ENCODE measurements at regions of chr5 and their contacts with region 1.

Region 1: GRCh38 chr5:10353241-10354047 is at the start of gene MARCHF6:
- DNase-seq: peak; percentile 95
- H3K4me3 ChIP-seq: peak within 1 kb of the TSS; percentile 83 to 97
- H3K27ac ChIP-seq: peak within 1 kb of the TSS; percentile 85 to 98
- H3K4me1 ChIP-seq: peaks cover 0 to 16% of the 10 kb centered on the region in 2 experiments; a peak in 2 of 4 replicates
- H3K27me3 ChIP-seq: no peaks in the 10 kb centered on the region
- CTCF ChIP-seq: no peak
- EP300 ChIP-seq: peak in 1 of 2 experiments; percentile 21; a peak in 1 of 4 replicates
- RAD21 ChIP-seq: no peak
- polyA plus RNA-seq, gene MARCHF6: 52.4 and 98.0 TPM in 2 replicates

Region 2: DNA sequence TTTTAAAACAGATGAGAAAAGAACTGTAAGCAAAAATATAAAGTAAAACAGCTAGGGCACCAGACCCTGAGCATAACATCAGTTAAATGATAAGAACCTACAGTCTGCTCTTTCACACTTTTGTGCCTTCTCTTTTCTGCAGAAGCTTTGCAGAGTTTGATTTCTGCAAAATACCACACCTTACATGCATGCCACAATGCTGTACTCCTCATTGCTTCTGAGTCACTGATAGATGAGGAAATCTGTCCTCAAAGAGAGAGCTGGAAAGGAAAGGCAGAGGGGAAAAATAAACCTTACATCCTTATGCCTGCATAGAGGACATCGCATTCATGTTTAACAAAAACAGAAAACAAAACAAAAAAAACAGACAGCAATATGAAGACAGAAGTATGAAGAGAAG is 246.6 kb before region 1 on chr5:
- CTCF ChIA-PET with region 1: no interaction called
- POLR2A ChIA-PET with region 1: no interaction called
- DNase-seq: no peak
- H3K4me3 ChIP-seq: no peak overlapping the region
- H3K27ac ChIP-seq: no peak overlapping the region
- H3K4me1 ChIP-seq: no peaks in the 10 kb centered on the region
- H3K27me3 ChIP-seq: no peaks in the 10 kb centered on the region
- CTCF ChIP-seq: no peak
- EP300 ChIP-seq: no peak
- RAD21 ChIP-seq: no peak

Region 3: DNA sequence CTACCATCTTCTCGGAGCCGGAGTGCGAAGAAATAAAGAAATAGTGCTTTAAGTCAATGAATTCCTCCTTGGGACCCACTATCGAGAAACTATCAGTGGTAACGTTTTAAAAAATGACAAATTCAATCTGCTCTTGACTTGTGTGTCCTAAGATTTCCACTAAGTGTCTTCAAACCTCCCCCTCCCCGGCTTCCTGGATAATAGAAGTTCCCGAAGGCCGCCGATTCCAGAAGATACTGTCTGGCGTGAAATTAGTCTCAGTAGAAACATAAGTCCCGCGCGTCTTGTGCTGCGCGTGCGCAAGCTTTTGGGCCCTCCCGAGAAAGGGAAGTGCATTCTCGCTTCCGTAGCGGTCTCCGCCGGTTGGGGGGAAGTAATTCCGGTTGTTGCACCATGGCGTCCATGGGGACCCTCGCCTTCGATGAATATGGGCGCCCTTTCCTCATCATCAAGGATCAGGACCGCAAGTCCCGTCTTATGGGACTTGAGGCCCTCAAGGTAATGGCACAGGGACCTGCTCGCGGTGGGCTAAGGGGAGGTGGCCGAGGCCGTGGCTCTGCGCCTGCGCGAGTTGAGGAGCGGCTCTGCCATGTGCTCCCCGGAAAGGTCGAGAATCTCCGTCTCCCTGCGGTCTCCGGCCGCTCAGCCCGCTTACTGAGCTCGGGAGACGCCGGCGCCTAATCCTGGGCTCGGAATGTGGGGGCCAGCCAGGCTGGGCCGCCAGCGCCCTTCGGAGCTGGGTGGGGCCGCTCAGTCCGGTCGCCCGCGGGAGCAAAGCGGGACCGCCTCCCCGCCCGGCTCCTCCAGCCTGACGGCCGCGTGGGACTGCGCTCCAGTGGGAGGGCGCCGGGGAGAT is 103.3 kb before region 1 on chr5 and contains the start of gene CCT5:
- CTCF ChIA-PET with region 1: no interaction called
- POLR2A ChIA-PET with region 1: interaction called, 11 read pairs
- DNase-seq: peak; percentile 94
- H3K4me3 ChIP-seq: peak within 1 kb of the TSS; percentile 93 to 98
- H3K27ac ChIP-seq: peak within 1 kb of the TSS; percentile 94 to 98
- H3K4me1 ChIP-seq: peaks cover 7 to 20% of the 10 kb centered on the region in 2 experiments; a peak in 3 of 4 replicates
- H3K27me3 ChIP-seq: no peaks in the 10 kb centered on the region
- CTCF ChIP-seq: no peak
- EP300 ChIP-seq: no peak
- RAD21 ChIP-seq: no peak
- polyA plus RNA-seq, gene CCT5: 378 and 472 TPM in 2 replicates

Region 4: DNA sequence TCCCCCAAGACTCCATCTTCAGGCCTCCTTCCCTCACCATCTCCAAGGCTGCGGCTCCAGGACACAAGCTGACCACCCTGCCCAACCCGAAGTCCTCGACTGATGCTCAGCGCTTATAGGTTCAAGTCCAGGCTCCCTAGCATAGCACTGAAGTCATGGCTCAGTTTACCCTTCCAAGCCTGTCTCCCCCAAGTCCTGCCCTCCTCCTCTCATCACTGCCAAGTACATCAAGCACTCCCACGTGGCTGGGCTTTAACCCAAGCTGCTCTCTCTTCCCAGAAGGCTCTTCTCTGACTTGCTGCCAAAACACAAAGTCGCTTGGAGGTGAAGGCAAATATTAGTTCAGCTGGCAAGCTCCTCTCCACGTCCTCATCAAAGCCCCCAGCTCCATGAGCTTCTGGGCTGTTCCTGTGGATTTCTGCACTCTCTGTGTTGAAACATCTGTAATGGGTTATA is 22.1 kb before region 1 on chr5:
- CTCF ChIA-PET with region 1: interaction called, 4 read pairs
- POLR2A ChIA-PET with region 1: interaction called, 16 read pairs
- DNase-seq: no peak
- H3K4me3 ChIP-seq: no peak overlapping the region
- H3K27ac ChIP-seq: no peak overlapping the region
- H3K4me1 ChIP-seq: peaks cover 0 to 24% of the 10 kb centered on the region in 2 experiments; a peak in 3 of 4 replicates
- H3K27me3 ChIP-seq: no peaks in the 10 kb centered on the region
- CTCF ChIP-seq: no peak
- EP300 ChIP-seq: no peak
- RAD21 ChIP-seq: no peak

Region 5: DNA sequence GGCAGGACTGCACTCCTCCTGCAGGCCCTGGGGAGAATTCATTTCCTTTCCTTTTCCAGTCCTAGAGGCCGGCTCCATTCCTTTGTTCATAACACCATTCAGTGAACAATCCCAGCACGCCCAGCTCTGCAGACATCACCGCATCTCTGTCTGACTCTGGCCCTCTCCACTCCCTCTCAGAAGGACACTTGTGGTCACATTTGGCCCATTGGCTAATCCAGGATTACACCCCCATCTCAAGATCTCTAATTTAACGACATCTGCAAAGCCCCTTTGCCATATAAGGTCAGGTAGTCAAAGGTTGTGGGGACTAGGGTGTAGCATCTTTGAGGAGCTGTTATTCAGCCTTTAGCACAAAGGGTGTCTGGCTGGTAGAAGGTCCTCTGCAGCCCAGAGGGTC is 592.6 kb after region 1 on chr5:
- CTCF ChIA-PET with region 1: no interaction called
- POLR2A ChIA-PET with region 1: no interaction called
- DNase-seq: no peak
- H3K4me3 ChIP-seq: no peak overlapping the region
- H3K27ac ChIP-seq: no peak overlapping the region
- H3K4me1 ChIP-seq: no peaks in the 10 kb centered on the region
- H3K27me3 ChIP-seq: peaks cover 6% of the 10 kb centered on the region; the same call in 1 of the 2 replicates
- CTCF ChIP-seq: no peak
- EP300 ChIP-seq: no peak
- RAD21 ChIP-seq: no peak